ENCODE measurements at regions of chr14 and their contacts with region 1.

Region 1: GRCh38 chr14:68248481-68249255 is 429.1 kb downstream of the RAD51B start:
- DNase-seq: peak in 4 of 7 donors; percentile 26 to 37 (median 31)
- H3K4me3 ChIP-seq: no peak overlapping the region
- H3K27ac ChIP-seq: peak overlapping the region in 3 of 5 donors; percentile 43 to 88 (median 61)
- H3K4me1 ChIP-seq: peaks cover 43 to 71% of the 10 kb centered on the region in 2 donors
- H3K27me3 ChIP-seq: no peaks in the 10 kb centered on the region
- CTCF ChIP-seq: peak; percentile 59 to 88 (median 69)
- POLR2A ChIP-seq: no peak

Region 2: GRCh38 chr14:67943947-67944346 is 304.7 kb before region 1 on chr14:
- intact Hi-C with region 1: loop called (anchors 5 to 10 kb)
- DNase-seq: peak; percentile 69 to 87 (median 80)
- H3K4me3 ChIP-seq: no peak overlapping the region
- H3K27ac ChIP-seq: no peak overlapping the region
- H3K4me1 ChIP-seq: peaks cover 4 to 34% of the 10 kb centered on the region in 2 donors
- H3K27me3 ChIP-seq: no peaks in the 10 kb centered on the region
- CTCF ChIP-seq: peak; percentile 51 to 97 (median 92)
- POLR2A ChIP-seq: no peak

Region 3: DNA sequence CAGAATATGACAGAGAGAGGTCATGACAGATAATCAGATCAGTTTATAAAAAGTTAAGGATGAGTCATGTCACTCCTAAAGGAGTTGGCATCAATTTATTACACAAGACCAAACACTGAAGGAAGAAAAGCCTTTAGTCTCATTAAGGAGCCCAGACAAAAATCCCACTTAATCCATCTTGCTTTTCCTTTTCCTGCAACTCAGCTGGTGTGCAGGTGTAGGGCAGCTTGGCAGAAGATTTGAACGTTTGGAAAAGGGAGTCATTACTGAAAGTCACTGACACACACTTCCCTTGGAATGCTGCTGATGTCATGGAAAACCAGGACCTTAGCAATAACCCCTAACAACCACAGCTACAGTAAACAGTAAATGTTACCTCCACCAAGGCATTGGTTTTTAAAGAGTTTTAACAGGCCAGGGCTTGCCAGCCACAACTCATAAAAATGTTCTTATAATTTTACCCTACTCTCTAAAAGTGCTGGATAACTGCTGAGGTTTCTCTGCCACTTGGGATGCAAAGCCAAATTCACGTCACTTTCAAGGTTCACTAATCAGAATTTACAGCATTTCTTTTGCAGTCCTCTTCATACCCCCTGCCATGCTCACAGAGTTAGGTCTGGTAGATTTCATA is 108.4 kb before region 1 on chr14:
- intact Hi-C with region 1: loop called in 1 of 2 experiments (anchors 10 kb)
- DNase-seq: peak; percentile 50 to 84 (median 75)
- H3K4me3 ChIP-seq: no peak overlapping the region
- H3K27ac ChIP-seq: peak overlapping the region; percentile 64 to 84 (median 83)
- H3K4me1 ChIP-seq: peaks cover 37 to 61% of the 10 kb centered on the region in 2 donors
- H3K27me3 ChIP-seq: no peaks in the 10 kb centered on the region
- CTCF ChIP-seq: no peak
- POLR2A ChIP-seq: peak in 1 of 2 donors; percentile 25

Region 4: DNA sequence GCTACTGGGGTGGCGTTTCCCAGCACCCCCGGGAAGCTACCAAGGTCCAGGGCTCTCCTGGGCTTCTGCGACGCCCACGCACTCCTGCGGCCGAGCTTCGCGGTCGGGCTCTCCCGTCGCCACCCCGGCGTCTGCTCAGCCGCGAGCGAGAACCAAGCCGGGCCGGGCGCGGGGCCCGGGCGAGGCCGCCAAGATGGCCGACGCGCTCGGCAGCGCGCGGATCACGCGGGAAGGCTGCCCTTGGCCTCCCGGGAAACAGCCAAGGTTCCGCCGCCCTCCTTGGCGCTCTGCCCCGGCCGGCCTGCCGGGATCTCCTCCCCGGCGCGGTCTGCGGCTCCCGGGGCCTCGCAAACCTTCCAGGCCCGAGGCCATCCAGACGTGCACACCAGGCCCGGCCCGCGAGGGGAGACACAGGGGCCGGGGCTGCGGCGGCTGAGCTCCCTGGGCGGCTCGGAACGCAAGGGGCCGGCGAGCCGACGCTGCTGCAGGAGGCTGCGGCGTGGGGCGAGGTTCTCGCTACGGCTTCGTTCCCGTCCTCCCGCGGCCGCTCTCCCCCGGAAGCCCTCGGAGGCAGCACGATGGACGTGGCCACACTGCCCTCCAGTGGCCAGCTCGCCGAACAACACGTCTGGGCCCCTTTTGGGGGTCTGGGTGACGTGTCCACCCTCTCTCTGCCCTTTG is 567.7 kb after region 1 on chr14:
- intact Hi-C with region 1: loop called (anchors 2 kb)
- DNase-seq: peak; percentile 88 to 92 (median 90)
- H3K4me3 ChIP-seq: peak overlapping the region in 2 of 4 donors; percentile 31 to 72
- H3K27ac ChIP-seq: peak overlapping the region; percentile 92 to 100 (median 96)
- H3K4me1 ChIP-seq: peaks cover 23 to 39% of the 10 kb centered on the region in 2 donors
- H3K27me3 ChIP-seq: no peaks in the 10 kb centered on the region
- CTCF ChIP-seq: peak; percentile 92 to 99 (median 98)
- POLR2A ChIP-seq: peak in 1 of 2 donors; percentile 53